ENCODE measurements at regions of chr6 and their contacts with region 1.

Region 1: DNA sequence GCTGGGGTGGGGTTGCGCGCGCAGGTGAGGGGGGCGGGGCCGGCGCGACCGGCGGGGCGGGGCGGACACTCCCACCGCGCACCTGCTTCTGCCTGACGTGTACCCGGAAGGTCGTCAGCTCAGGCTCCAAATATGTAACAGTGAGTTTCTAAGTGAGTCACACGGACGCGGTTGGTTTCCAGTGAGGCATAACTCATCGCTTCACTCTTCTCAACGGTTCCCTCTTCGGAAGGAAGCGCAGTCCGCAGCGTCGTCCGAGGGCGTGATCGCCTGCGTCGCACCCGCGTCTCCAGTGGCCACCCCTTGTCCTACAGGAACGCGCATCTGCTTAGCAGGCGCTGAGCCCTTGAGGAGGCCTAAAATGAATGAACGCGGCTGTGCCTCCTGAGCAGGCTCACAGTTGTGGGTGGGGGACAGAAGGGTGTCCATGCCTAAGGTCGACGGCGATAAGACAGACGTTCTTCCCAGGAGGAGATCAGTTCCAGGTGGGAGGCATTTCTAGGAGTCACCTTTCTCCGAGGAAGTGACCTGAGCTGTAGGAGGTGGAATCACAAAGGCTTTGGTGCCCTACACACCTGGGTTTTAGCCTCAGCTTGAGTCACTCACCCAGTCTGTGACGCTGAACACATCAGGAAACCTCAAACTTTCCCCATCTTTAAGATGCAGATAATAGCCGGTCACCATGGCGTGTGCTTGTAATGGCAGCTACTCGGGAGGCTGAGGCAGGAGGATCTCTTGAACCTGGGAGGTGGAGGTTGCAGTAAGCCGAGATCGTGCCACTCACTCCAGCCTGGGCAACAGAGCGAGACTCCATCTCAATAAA is 50.9 kb upstream of the EZR start:
- DNase-seq: peak in 3 of 5 donors; percentile 41 to 99 (median 57)
- H3K4me3 ChIP-seq: peak overlapping the region; percentile 79
- H3K4me3 Mint-ChIP-seq: peak overlapping the region; percentile 81 to 94 (median 89)
- H3K27ac ChIP-seq: peak overlapping the region; percentile 98
- H3K27ac Mint-ChIP-seq: peak overlapping the region; percentile 96 to 100 (median 99)
- H3K4me1 ChIP-seq: peaks cover 20% of the 10 kb centered on the region
- H3K4me1 Mint-ChIP-seq: peaks cover 23 to 46% (median 36%) of the 10 kb centered on the region in 3 donors
- H3K27me3 ChIP-seq: no peaks in the 10 kb centered on the region
- H3K27me3 Mint-ChIP-seq: peaks cover 0 to 4% of the 10 kb centered on the region in 2 donors

Region 2: DNA sequence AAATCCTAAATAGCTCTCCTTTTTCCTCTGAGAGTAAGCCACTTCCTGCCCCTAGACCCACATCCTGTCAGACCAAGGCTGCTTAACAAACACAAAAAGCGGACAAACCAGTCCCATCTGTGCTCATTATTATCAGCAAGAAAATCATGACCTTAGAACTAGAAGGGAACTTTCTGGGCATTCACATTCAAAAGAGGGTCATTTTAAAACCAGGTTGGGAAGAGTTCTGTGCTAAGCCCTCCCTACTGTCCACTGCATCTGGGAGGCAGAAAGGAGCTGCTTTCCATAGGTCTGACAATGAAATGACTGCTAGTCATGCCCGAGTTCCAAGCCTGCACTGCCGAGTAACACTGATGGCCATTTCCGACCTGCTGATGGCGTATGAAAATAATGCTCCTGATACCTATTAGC is 66.3 kb before region 1 on chr6:
- CTCF ChIA-PET with region 1: interaction called, 8 read pairs
- POLR2A ChIA-PET with region 1: interaction called, 68 read pairs
- DNase-seq: peak; percentile 41 to 77 (median 57)
- H3K4me3 ChIP-seq: peak overlapping the region; percentile 42
- H3K4me3 Mint-ChIP-seq: peak overlapping the region; percentile 69 to 86 (median 80)
- H3K27ac ChIP-seq: peak overlapping the region; percentile 59
- H3K27ac Mint-ChIP-seq: peak overlapping the region; percentile 70 to 97 (median 88)
- H3K4me1 ChIP-seq: peaks cover 88% of the 10 kb centered on the region
- H3K4me1 Mint-ChIP-seq: peaks cover 92 to 100% (median 100%) of the 10 kb centered on the region in 3 donors
- H3K27me3 ChIP-seq: no peaks in the 10 kb centered on the region
- H3K27me3 Mint-ChIP-seq: no peaks in the 10 kb centered on the region

Region 3: GRCh38 chr6:158819213-158819909 is 50.7 kb before region 1 on chr6 and contains the start of gene EZR:
- CTCF ChIA-PET with region 1: interaction called, 17 read pairs
- POLR2A ChIA-PET with region 1: interaction called, 116 read pairs
- DNase-seq: peak; percentile 82 to 93 (median 84)
- H3K4me3 ChIP-seq: peak within 1 kb of the TSS; percentile 39
- H3K4me3 Mint-ChIP-seq: peak within 1 kb of the TSS; percentile 79 to 100 (median 99)
- H3K27ac ChIP-seq: peak within 1 kb of the TSS; percentile 99
- H3K27ac Mint-ChIP-seq: peak within 1 kb of the TSS; percentile 88 to 99 (median 93)
- H3K4me1 ChIP-seq: peaks cover 36% of the 10 kb centered on the region
- H3K4me1 Mint-ChIP-seq: peaks cover 40 to 52% (median 46%) of the 10 kb centered on the region in 3 donors
- H3K27me3 ChIP-seq: no peaks in the 10 kb centered on the region
- H3K27me3 Mint-ChIP-seq: peaks cover 0 to 3% of the 10 kb centered on the region in 2 donors
- total RNA-seq, gene EZR: 296 to 299 TPM

Region 4: GRCh38 chr6:158853072-158853871 is 16.8 kb before region 1 on chr6:
- CTCF ChIA-PET with region 1: interaction called, 43 read pairs
- POLR2A ChIA-PET with region 1: interaction called, 186 read pairs
- DNase-seq: peak; percentile 81 to 96 (median 86)
- H3K4me3 ChIP-seq: peak overlapping the region; percentile 68
- H3K4me3 Mint-ChIP-seq: no peak overlapping the region
- H3K27ac ChIP-seq: peak overlapping the region; percentile 95
- H3K27ac Mint-ChIP-seq: no peak overlapping the region
- H3K4me1 ChIP-seq: peaks cover 64% of the 10 kb centered on the region
- H3K4me1 Mint-ChIP-seq: peaks cover 9 to 39% (median 36%) of the 10 kb centered on the region in 3 donors
- H3K27me3 ChIP-seq: no peaks in the 10 kb centered on the region
- H3K27me3 Mint-ChIP-seq: peaks cover 0 to 1% of the 10 kb centered on the region in 2 donors

Region 5: DNA sequence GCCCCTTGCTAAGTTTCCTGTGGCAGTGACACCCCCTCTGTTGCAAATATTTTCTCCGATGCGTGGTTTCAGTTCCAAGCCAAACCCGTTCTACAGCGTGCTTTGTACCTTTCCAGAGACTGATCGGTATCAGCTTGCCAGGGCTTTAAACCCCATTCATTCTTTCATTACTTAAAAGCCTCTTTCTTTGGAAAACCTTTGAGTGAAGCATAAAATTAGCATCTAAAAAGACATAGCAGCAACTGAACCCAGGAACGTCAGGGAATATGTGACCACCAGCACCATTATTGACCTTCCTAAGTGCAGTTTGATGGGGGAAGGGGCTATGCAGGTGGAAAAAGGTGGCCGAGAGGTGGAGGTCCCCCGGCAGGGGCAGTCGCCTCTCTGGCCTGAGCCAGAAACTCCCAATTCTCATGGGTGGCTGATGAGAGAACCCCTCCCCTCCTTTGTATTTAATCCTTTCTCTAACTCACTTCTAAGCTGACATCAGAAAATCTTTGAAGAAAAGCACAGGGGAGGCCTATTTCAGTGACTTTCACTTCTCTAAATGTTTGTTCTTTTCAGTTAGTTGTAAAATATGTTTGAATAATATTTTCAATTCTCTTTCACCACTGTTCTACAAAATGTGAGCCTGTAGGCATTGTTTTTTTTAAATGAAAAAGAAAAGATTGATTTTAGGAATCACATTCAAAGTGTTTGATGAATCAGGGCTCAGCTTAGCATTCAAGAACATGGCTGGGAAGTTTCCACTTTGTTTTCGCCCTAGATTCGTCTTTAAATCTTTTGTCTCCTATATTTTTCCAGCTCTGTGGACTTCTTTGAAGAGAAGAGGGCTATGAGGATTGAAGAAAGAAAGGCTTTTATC is 40.7 kb after region 1 on chr6:
- CTCF ChIA-PET with region 1: interaction called, 9 read pairs
- POLR2A ChIA-PET with region 1: interaction called, 16 read pairs
- DNase-seq: peak in 1 of 5 donors; percentile 21
- H3K4me3 ChIP-seq: peak overlapping the region; percentile 67
- H3K4me3 Mint-ChIP-seq: peak overlapping the region; percentile 37 to 90 (median 82)
- H3K27ac ChIP-seq: no peak overlapping the region
- H3K27ac Mint-ChIP-seq: peak overlapping the region in 7 of 8 donors; percentile 66 to 95 (median 85)
- H3K4me1 ChIP-seq: peaks cover 33% of the 10 kb centered on the region
- H3K4me1 Mint-ChIP-seq: peaks cover 43 to 50% (median 46%) of the 10 kb centered on the region in 3 donors
- H3K27me3 ChIP-seq: no peaks in the 10 kb centered on the region
- H3K27me3 Mint-ChIP-seq: peaks cover 0 to 2% of the 10 kb centered on the region in 2 donors

Region 6: GRCh38 chr6:159035891-159036290 is 165.9 kb after region 1 on chr6:
- CTCF ChIA-PET with region 1: no interaction called
- POLR2A ChIA-PET with region 1: no interaction called
- DNase-seq: no peak
- H3K4me3 ChIP-seq: no peak overlapping the region
- H3K4me3 Mint-ChIP-seq: peak overlapping the region in 6 of 7 donors; percentile 19 to 100 (median 63)
- H3K27ac ChIP-seq: no peak overlapping the region
- H3K27ac Mint-ChIP-seq: peak overlapping the region; percentile 71 to 100 (median 90)
- H3K4me1 ChIP-seq: peaks cover 51% of the 10 kb centered on the region
- H3K4me1 Mint-ChIP-seq: peaks cover 66 to 83% (median 71%) of the 10 kb centered on the region in 3 donors
- H3K27me3 ChIP-seq: no peaks in the 10 kb centered on the region
- H3K27me3 Mint-ChIP-seq: no peaks in the 10 kb centered on the region

Measured in CD8-positive, alpha-beta memory T cell (primary cell).